Ascending aorta (tissue), 2 donors: ENCODE measurements at regions of chr15 and their contacts with region 1.

Region 1: GRCh38 chr15:40906091-40906990 is 12.1 kb downstream of the VPS18 start:
- DNase-seq: peak; percentile 79 to 95
- H3K4me3 ChIP-seq: peak overlapping the region; percentile 32 to 66
- H3K27ac ChIP-seq: peak overlapping the region; percentile 96
- H3K4me1 ChIP-seq: peaks cover 19 to 24% of the 10 kb centered on the region in 2 donors
- H3K27me3 ChIP-seq: no peaks in the 10 kb centered on the region
- CTCF ChIP-seq: peak; percentile 75 to 82 (median 75)

Region 2: DNA sequence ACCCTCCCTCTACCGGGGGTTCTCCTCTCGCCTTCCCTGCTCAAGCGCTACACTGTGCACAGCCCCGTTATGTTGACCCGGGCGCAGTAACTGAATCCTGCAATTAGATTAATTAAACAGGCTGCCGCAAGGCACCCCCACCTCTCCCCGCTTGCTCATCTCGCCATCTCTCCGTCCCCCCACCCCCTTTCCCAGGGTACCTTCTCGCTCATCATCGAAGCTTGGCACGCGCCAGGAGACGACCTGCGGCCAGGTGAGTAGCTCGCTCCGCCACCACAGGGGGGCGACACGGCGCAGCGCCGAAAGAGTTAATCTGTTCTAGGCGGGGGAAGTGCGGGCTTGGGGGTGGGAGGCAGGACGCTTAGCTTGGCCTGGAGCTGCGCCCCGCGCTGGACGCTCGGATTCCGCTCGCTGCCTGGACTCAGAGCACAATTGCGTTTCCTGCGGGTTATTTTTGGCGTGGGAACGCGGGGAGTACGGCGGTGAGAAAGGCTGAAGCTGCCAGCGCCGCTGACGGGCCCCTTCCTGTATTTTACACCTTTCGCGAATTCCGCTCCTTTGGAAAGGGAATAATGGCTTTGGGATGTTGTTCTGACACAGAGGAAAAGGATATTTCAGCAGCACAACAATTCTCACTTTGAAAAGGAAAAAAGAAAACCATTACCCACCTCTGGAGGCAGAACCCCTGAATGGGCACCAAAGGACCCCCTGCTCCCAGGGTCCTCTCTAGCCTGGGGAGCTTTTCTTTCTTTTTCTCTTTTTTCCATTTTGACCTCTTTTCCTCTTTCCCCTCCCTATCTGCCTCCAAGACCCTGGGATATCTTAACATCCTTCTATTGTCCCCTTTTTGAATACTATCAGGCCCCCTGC is 24.3 kb after region 1 on chr15:
- intact Hi-C with region 1: loop called (anchors 2 kb)
- DNase-seq: no peak
- H3K4me3 ChIP-seq: peak overlapping the region; percentile 45 to 66
- H3K27ac ChIP-seq: no peak overlapping the region
- H3K4me1 ChIP-seq: peaks cover 28 to 45% of the 10 kb centered on the region in 2 donors
- H3K27me3 ChIP-seq: peaks cover 8% of the 10 kb centered on the region
- CTCF ChIP-seq: peak; percentile 9 to 40 (median 33)

Region 3: DNA sequence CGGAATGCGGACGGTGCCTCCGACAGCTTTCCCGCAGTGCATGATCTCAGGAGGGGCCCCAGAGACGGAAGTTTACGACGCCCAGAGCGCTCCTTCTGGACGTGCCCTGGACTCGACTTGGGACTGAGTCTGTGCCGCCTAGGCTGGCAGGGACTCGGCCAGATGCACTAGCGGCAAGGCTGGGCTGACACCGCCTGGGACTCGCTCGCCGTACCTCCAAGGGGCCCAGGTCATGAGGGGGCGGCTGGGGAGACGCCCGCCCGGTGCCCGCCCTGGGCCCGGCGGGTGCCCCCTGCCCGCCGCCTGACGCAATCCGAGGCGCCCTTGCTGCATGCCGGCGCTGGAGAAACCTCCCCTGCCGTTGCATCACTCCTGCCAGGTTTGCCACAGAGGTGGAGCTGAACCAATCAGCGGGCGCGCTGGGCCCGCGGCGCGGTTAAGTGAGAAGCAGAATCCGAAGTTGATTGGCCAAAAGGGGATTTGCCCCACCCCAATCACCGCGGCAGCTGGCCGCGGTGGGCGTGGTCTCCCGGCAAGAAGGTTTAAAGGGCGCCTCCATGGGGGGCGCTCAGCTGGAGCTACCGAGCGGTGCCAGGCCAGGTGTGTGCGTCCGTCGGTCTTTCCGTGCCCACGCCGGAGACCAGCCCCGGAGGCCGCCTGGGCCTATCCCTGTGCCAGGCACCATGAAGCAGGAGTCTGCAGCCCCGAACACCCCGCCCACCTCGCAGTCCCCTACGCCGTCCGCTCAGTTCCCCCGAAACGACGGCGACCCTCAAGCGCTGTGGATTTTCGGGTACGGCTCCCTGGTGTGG is 46.8 kb after region 1 on chr15 and contains the start of gene CHAC1:
- intact Hi-C with region 1: loop called (anchors 2 kb)
- DNase-seq: peak; percentile 90 to 98
- H3K4me3 ChIP-seq: peak within 1 kb of the TSS; percentile 64 to 96
- H3K27ac ChIP-seq: peak within 1 kb of the TSS; percentile 80 to 88
- H3K4me1 ChIP-seq: peaks cover 7 to 35% of the 10 kb centered on the region in 2 donors
- H3K27me3 ChIP-seq: no peaks in the 10 kb centered on the region
- CTCF ChIP-seq: peak; percentile 0 to 18 (median 11)
- total RNA-seq, gene CHAC1: 28.5 TPM

Region 4: GRCh38 chr15:41022487-41023090 is 116.2 kb after region 1 on chr15:
- intact Hi-C with region 1: loop called (anchors 1 kb)
- DNase-seq: peak in 1 of 2 donors; percentile 70
- H3K4me3 ChIP-seq: no peak overlapping the region
- H3K27ac ChIP-seq: peak overlapping the region; percentile 51 to 76
- H3K4me1 ChIP-seq: peaks cover 5 to 31% of the 10 kb centered on the region in 2 donors
- H3K27me3 ChIP-seq: no peaks in the 10 kb centered on the region
- CTCF ChIP-seq: peak; percentile 67 to 87 (median 72)

Region 5: GRCh38 chr15:41180206-41180789 is 274.0 kb after region 1 on chr15:
- intact Hi-C with region 1: loop called (anchors 2 kb)
- DNase-seq: no peak
- H3K4me3 ChIP-seq: no peak overlapping the region
- H3K27ac ChIP-seq: no peak overlapping the region
- H3K4me1 ChIP-seq: no peaks in the 10 kb centered on the region
- H3K27me3 ChIP-seq: no peaks in the 10 kb centered on the region
- CTCF ChIP-seq: no peak

Region 6: DNA sequence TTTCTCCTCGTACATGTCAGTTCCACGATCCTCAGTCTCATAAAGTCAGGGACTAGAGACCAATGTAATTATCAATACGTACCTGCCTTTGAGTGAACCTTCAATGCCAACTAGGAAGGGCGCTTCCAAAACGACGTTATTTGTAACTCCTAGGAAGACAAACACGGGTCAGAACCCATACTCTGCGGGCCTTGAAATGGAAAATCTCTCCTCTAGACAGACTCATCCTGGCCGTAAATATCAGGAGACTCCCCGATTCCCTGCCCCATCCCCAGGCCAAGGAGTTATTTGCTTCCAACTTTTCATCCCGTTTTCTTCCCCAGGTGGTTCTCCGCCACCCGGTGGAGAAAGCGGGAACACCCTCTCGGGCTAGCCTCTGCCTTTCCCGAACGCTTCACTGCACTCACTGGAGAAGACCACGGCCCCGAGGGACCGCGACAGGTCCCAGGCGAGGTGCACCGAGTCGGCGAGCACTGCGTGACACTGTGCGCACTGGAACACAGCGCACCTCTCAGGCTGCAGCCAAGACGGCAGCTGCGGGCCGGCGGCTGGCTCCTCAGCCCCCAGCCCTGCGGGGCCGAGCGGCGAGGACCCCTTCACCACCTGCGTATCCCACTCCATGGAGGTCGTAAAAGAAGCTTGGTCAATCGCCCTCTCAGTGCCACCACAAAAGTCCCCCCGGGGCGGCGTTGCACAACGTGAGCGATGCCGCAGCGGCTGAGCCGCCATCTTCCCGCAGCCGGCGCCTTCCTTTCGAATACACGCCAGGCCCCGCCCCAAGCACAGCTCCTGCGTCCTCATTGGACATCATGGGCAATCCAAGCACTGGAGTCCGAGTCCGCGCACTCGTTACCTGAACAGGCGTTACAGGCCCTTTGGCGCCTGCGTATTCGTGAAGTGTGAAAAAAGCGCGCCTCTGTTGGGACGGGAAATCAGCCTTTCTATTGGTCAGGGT is 425.8 kb after region 1 on chr15 and contains the start of gene OIP5:
- intact Hi-C with region 1: loop called (anchors 5 kb)
- DNase-seq: peak; percentile 96 to 99
- H3K4me3 ChIP-seq: peak within 1 kb of the TSS; percentile 89 to 91
- H3K27ac ChIP-seq: peak within 1 kb of the TSS in 1 of 2 donors; percentile 40
- H3K4me1 ChIP-seq: peaks cover 0 to 8% of the 10 kb centered on the region in 2 donors
- H3K27me3 ChIP-seq: no peaks in the 10 kb centered on the region
- CTCF ChIP-seq: peak; percentile 59 to 74 (median 67)
- total RNA-seq, gene OIP5: not detected

Region 7: DNA sequence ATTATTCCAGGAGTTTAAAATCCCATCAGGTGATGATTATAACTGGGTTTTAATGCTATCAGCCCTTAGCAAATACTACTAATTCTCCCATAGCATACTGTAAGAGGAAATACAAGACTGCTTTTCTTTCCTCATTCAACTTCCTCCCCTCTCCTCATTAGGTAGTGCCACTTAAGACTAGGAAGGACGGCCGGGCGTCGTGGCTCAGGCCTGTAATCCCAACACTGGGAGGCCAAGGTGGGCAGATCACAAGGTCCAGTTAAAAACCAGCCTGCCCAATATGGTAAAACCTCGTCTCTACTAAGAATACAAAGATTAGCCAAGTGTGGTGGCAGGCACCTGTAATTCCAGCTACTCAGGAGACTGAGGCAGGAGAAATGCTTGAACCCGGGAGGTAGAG is 481.3 kb after region 1 on chr15:
- intact Hi-C with region 1: no loop called
- DNase-seq: no peak
- H3K4me3 ChIP-seq: no peak overlapping the region
- H3K27ac ChIP-seq: no peak overlapping the region
- H3K4me1 ChIP-seq: no peaks in the 10 kb centered on the region
- H3K27me3 ChIP-seq: no peaks in the 10 kb centered on the region
- CTCF ChIP-seq: no peak